Mammary epithelial cell (primary cell): ENCODE measurements at regions of chr6 and their contacts with region 1.

Region 1: GRCh38 chr6:22045261-22045912 is 251.4 kb downstream of the PRL start:
- DNase-seq: no peak
- H3K4me3 ChIP-seq: no peak overlapping the region
- H3K27ac ChIP-seq: no peak overlapping the region
- H3K4me1 ChIP-seq: peaks cover 3% of the 10 kb centered on the region
- H3K27me3 ChIP-seq: no peaks in the 10 kb centered on the region
- CTCF ChIP-seq: no peak

Region 2: DNA sequence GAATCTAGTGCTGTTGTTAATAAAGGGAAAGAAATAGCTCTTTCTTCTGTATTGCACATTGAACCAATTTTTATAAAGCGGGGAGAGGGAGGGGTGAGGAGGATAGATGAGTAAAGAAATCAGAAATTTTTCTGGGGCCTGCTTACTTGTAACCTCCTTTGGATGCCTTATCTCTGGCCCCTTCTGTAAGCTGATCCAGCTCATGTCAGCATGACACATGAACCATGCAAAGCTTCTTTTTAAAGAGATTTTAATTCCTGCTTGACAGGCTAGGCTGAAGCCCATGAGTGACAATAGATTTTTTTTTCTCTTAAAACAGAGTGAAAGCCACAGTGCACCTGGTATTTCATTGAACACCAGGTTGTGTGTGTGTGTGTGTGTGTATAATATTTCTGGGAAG is 73.8 kb before region 1 on chr6:
- CTCF ChIA-PET with region 1: no interaction called
- dilution Hi-C with region 1: no loop called
- in situ Hi-C with region 1: no loop called
- intact Hi-C with region 1: no loop called
- DNase-seq: no peak
- H3K4me3 ChIP-seq: no peak overlapping the region
- H3K27ac ChIP-seq: no peak overlapping the region
- H3K4me1 ChIP-seq: no peaks in the 10 kb centered on the region
- H3K27me3 ChIP-seq: no peaks in the 10 kb centered on the region
- CTCF ChIP-seq: no peak

Region 3: GRCh38 chr6:21984561-21984960 is 60.8 kb before region 1 on chr6:
- CTCF ChIA-PET with region 1: no interaction called
- dilution Hi-C with region 1: loop called (anchors 5 kb)
- in situ Hi-C with region 1: no loop called
- intact Hi-C with region 1: no loop called
- DNase-seq: no peak
- H3K4me3 ChIP-seq: no peak overlapping the region
- H3K27ac ChIP-seq: no peak overlapping the region
- H3K4me1 ChIP-seq: peaks cover 12% of the 10 kb centered on the region
- H3K27me3 ChIP-seq: no peaks in the 10 kb centered on the region
- CTCF ChIP-seq: no peak